Calu3 (cell line): ENCODE measurements at regions of chr1 and their contacts with region 1.

Region 1: DNA sequence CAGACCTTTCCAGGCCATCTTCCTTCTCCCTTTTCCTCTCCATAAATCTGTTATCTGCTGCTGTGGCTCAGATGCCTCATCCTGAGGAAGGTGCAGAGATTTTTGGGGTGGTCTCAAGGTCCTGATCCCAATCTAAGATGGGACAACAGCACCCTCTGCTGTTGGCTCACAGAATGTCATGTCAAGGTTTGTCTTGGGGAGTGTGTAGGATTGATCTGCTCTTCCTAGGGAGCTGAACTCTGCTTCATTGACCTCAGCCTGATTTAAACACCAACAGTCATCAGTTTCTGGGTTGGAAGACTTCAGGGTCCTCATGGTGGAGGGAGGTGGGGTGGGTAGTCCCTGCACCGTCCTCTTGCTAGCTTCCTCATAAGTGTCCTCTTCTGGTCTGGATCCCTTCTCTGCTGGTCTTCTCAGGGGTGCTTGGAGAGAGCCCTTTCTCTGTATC is 62.8 kb upstream of the LAX1 start:
- DNase-seq: peak; percentile 55
- H3K4me3 Mint-ChIP-seq: no peak overlapping the region
- H3K27ac Mint-ChIP-seq: no peak overlapping the region
- H3K4me1 Mint-ChIP-seq: no peaks in the 10 kb centered on the region
- H3K27me3 Mint-ChIP-seq: peaks cover 15% of the 10 kb centered on the region
- CTCF ChIP-seq: peak; percentile 97

Region 2: GRCh38 chr1:203609979-203610493 is 92.1 kb before region 1 on chr1:
- CTCF ChIA-PET with region 1: interaction called, 3 read pairs
- intact Hi-C with region 1: loop called (anchors 5 kb)
- DNase-seq: no peak
- H3K4me3 Mint-ChIP-seq: no peak overlapping the region
- H3K27ac Mint-ChIP-seq: no peak overlapping the region
- H3K4me1 Mint-ChIP-seq: peaks cover 16% of the 10 kb centered on the region
- H3K27me3 Mint-ChIP-seq: peaks cover 11% of the 10 kb centered on the region
- CTCF ChIP-seq: no peak

Region 3: DNA sequence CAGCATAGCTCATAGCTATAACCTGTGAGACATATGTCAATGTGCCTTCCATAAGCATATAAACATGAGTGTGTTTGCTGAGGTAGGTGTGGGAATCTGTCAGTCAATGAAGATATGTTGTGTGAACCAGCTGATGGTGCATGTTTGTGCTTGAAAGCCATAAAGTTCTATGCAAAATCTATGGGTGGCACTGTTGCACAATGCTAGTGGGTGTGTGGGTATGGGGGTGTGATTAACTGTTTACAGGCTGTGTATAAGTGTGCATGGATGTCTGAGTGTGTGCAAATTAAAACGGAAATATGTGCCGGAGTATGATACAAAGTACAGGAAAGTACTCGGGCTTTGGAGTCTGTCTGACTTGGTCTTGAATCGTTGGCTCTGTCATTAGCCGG is 76.5 kb before region 1 on chr1:
- CTCF ChIA-PET with region 1: interaction called, 9 read pairs
- intact Hi-C with region 1: loop called (anchors 1 kb)
- DNase-seq: no peak
- H3K4me3 Mint-ChIP-seq: peak overlapping the region; percentile 22
- H3K27ac Mint-ChIP-seq: peak overlapping the region; percentile 54
- H3K4me1 Mint-ChIP-seq: peaks cover 43% of the 10 kb centered on the region
- H3K27me3 Mint-ChIP-seq: peaks cover 54% of the 10 kb centered on the region
- CTCF ChIP-seq: no peak

Region 4: GRCh38 chr1:203744075-203744972 is 42.2 kb after region 1 on chr1:
- CTCF ChIA-PET with region 1: no interaction called
- intact Hi-C with region 1: no loop called
- DNase-seq: no peak
- H3K4me3 Mint-ChIP-seq: no peak overlapping the region
- H3K27ac Mint-ChIP-seq: no peak overlapping the region
- H3K4me1 Mint-ChIP-seq: no peaks in the 10 kb centered on the region
- H3K27me3 Mint-ChIP-seq: peaks cover 57% of the 10 kb centered on the region
- CTCF ChIP-seq: no peak

Region 5: GRCh38 chr1:203818399-203818798 is 116.2 kb after region 1 on chr1:
- CTCF ChIA-PET with region 1: no interaction called
- intact Hi-C with region 1: no loop called
- DNase-seq: no peak
- H3K4me3 Mint-ChIP-seq: no peak overlapping the region
- H3K27ac Mint-ChIP-seq: no peak overlapping the region
- H3K4me1 Mint-ChIP-seq: no peaks in the 10 kb centered on the region
- H3K27me3 Mint-ChIP-seq: no peaks in the 10 kb centered on the region
- CTCF ChIP-seq: no peak